ENCODE measurements at regions of chrX and their contacts with region 1.

Region 1: DNA sequence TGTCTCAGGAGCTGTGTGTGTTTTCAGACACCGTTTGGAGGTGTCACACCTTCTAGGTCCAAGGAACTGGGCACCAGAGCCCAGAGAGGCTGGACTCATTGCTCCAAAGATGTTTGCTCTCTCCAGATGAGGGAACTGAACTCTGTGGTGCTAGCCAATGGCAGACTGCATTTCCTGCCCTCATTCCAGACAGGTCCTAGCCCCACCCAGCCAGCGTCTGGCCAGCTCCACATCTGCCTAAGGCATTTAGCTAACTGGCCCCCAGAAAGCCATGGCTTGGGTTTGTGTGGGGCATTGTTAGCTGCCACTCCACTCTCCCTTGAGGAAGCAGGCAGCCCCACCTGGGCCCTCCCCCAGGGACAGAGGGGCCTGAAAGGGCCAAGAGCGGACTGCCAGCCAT is 11.4 kb downstream of the FGD1 start:
- DNase-seq: no peak
- H3K4me3 ChIP-seq: no peak overlapping the region
- H3K27ac ChIP-seq: no peak overlapping the region
- H3K4me1 ChIP-seq: no peaks in the 10 kb centered on the region
- H3K27me3 ChIP-seq: no peaks in the 10 kb centered on the region
- CTCF ChIP-seq: no peak

Region 2: DNA sequence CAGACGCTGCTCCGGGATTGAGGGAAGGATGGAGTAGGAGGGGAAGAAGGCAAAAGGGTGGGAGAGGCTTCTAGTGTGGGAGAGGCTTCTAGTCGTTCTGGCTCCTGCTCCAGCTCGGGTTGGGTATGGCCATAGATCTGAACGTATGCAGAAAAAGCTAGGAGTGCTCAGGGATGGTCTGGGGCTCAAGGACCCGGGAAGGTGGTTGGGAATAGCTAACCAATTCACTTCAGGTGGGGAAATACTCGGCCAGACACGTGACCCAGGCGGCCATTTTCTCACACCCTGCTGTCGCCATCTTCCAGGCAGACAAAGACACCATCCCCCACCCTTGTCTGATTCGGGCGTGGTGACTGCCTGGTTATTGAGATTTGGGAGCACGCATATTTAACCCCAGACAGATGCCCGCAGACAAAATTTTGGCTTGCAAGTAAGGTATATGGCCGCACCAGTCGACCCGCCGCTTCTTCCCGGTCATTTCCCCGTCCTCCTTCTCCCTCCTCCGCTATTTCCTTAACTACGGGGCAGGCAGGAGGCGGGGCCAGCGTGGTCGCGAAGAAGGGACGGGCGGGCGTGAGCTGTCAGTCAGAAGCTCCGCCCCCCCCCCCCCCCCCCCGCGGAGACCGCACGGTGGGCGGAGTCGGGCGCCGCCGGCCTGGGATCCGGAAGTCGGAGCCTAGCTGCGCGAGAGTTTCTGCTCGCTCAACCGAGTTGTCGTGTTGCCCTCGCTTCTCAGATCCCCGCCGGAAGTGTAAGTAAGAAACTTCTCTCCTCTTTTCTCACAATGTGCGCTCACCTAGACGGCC is 45.1 kb after region 1 on chrX and contains the start of gene GNL3L:
- intact Hi-C with region 1: loop called (anchors 2 kb)
- DNase-seq: peak; percentile 81
- H3K4me3 ChIP-seq: peak within 1 kb of the TSS; percentile 67
- H3K27ac ChIP-seq: peak within 1 kb of the TSS; percentile 59
- H3K4me1 ChIP-seq: no peaks in the 10 kb centered on the region
- H3K27me3 ChIP-seq: no peaks in the 10 kb centered on the region
- CTCF ChIP-seq: no peak
- total RNA-seq, gene GNL3L: 23.5 to 38.3 TPM

Measured in colonic mucosa (tissue), 4 donors.